Breast epithelium (tissue), 4 donors: ENCODE measurements at regions of chr5 and their contacts with region 1.

Region 1: DNA sequence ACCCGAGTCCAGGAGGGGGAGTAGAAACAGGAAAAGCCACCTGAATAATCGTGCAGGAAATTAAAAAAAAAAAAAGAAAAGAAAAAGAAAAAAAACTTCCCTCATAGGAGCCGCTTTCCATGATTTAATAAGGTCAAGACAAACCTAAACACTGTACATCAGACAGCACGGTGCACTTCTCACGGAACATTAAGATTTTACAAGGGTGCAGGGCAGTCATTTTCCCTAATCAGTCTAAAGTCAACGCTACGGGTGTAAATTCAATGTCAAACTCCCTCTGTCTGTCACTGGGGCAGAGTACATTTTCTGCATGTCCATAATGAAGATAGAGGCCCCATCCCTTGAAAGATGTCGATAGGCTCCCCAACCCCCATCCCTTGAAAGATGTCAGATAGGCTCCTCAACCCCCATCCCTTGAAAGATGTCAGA is 139.7 kb downstream of the TSSK1B start:
- DNase-seq: no peak
- H3K4me3 ChIP-seq: peak overlapping the region; percentile 64 to 91 (median 86)
- H3K27ac ChIP-seq: peak overlapping the region; percentile 52 to 88
- H3K4me1 ChIP-seq: peaks cover 0 to 5% of the 10 kb centered on the region in 2 donors
- H3K27me3 ChIP-seq: no peaks in the 10 kb centered on the region
- CTCF ChIP-seq: peak in 1 of 3 donors; percentile 15
- POLR2A ChIP-seq: no peak

Region 2: DNA sequence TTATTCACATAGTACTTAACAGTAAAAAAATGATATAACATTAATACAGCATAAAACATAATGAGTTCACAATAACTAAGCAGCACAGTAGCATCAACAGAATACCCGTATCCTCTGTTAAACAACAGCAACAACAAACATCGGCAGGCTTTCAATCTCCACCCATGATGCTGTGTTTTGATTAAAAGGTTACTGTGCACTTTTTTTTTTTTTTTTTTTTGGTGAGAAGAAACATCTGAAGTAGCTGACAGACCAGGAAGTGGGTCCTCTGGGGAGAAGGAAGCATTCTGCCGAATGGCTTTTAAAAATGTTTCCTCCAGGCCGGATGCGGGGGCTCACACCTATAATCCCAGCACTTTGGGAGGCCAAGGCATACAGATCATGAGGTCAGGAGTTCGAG is 1158.4 kb before region 1 on chr5:
- intact Hi-C with region 1: no loop called
- DNase-seq: no peak
- H3K4me3 ChIP-seq: no peak overlapping the region
- H3K27ac ChIP-seq: no peak overlapping the region
- H3K4me1 ChIP-seq: no peaks in the 10 kb centered on the region
- H3K27me3 ChIP-seq: no peaks in the 10 kb centered on the region
- CTCF ChIP-seq: no peak
- POLR2A ChIP-seq: no peak

Region 3: GRCh38 chr5:113311301-113311700 is 16.2 kb after region 1 on chr5:
- intact Hi-C with region 1: loop called (anchors 1 kb)
- DNase-seq: no peak
- H3K4me3 ChIP-seq: no peak overlapping the region
- H3K27ac ChIP-seq: no peak overlapping the region
- H3K4me1 ChIP-seq: no peaks in the 10 kb centered on the region
- H3K27me3 ChIP-seq: no peaks in the 10 kb centered on the region
- CTCF ChIP-seq: no peak
- POLR2A ChIP-seq: no peak